Activated CD8-positive, alpha-beta T cell treated with anti-CD3 and anti-CD28 coated beads for 36 hours (primary cell): ENCODE measurements at regions of chr4 and their contacts with region 1.

Region 1: DNA sequence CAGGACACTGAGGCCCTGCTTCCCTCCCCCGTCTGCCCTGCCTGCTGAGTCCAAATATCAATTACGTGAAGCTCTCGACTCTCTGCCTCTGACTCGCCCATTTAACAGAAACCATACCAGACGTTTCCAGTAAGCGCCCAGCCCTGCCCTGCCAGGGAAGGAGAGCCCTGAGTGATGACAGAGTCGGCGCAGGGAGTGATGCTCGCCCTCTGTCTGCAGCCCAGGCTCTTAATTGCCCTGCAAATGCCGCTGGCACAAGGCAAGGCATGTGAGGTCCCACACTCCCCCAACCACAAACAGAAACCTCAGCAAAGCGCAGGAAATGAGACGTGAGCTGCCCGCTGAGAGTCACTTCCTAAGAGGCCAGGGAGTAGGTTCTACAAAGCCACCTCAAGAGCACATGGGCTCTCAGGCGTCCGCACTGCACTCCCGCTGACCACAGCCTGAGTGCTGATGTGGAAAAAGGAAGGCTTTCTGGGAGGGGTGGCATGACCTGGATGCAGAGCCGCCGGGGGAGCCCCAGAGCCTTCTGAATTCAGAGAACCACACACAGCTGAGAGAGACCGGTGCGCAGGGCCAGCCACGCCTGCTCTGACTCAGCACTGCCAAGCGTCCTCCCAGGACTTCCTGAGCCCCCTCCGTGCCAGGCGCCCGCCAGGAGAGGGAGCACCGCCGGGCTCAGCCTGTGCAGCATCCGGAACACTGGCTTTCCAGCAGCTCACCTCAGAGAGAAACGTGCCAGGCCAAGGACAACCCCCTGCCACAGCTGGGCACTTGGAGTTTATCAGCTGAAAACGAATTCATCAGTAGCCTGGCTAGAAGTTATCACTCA is 5.3 kb downstream of the ZFYVE28 start:
- DNase-seq: peak; percentile 96
- ATAC-seq: peak; percentile 86
- H3K4me3 Mint-ChIP-seq: peak overlapping the region; percentile 56
- H3K27ac Mint-ChIP-seq: peak overlapping the region; percentile 99
- H3K4me1 Mint-ChIP-seq: peaks cover 58% of the 10 kb centered on the region
- H3K27me3 Mint-ChIP-seq: peaks cover 26% of the 10 kb centered on the region
- CTCF ChIP-seq: no peak

Region 2: GRCh38 chr4:2241410-2242353 is 171.4 kb before region 1 on chr4 and contains the starts of genes HAUS3 and POLN:
- CTCF ChIA-PET with region 1: interaction called, 7 read pairs
- POLR2A ChIA-PET with region 1: interaction called, 7 read pairs
- intact Hi-C with region 1: loop called (anchors 5 kb)
- DNase-seq: peak; percentile 99
- ATAC-seq: peak; percentile 98
- H3K4me3 Mint-ChIP-seq: peak within 1 kb of the TSS; percentile 83
- H3K27ac Mint-ChIP-seq: peak within 1 kb of the TSS; percentile 88
- H3K4me1 Mint-ChIP-seq: peaks cover 55% of the 10 kb centered on the region
- H3K27me3 Mint-ChIP-seq: no peaks in the 10 kb centered on the region
- CTCF ChIP-seq: no peak
- total RNA-seq, gene HAUS3: 18.4 to 19.5 TPM
- total RNA-seq, gene POLN: 2.1 to 2.9 TPM

Region 3: GRCh38 chr4:2262143-2262943 is 150.8 kb before region 1 on chr4:
- CTCF ChIA-PET with region 1: interaction called, 3 read pairs
- POLR2A ChIA-PET with region 1: interaction called, 3 read pairs
- intact Hi-C with region 1: loop called (anchors 2 kb)
- DNase-seq: peak; percentile 99
- ATAC-seq: peak; percentile 93
- H3K4me3 Mint-ChIP-seq: peak overlapping the region; percentile 69
- H3K27ac Mint-ChIP-seq: peak overlapping the region; percentile 66
- H3K4me1 Mint-ChIP-seq: no peaks in the 10 kb centered on the region
- H3K27me3 Mint-ChIP-seq: no peaks in the 10 kb centered on the region
- CTCF ChIP-seq: no peak

Region 4: GRCh38 chr4:2281575-2282343 is 131.3 kb before region 1 on chr4:
- CTCF ChIA-PET with region 1: interaction called, 3 read pairs
- POLR2A ChIA-PET with region 1: interaction called, 3 read pairs
- intact Hi-C with region 1: loop called (anchors 5 kb)
- DNase-seq: peak; percentile 91
- ATAC-seq: peak; percentile 93
- H3K4me3 Mint-ChIP-seq: peak overlapping the region; percentile 43
- H3K27ac Mint-ChIP-seq: peak overlapping the region; percentile 96
- H3K4me1 Mint-ChIP-seq: peaks cover 37% of the 10 kb centered on the region
- H3K27me3 Mint-ChIP-seq: no peaks in the 10 kb centered on the region
- CTCF ChIP-seq: peak; percentile 41

Region 5: GRCh38 chr4:2393353-2394270 is 19.5 kb before region 1 on chr4:
- CTCF ChIA-PET with region 1: interaction called, 12 read pairs
- POLR2A ChIA-PET with region 1: interaction called, 4 read pairs
- intact Hi-C with region 1: no loop called
- DNase-seq: no peak
- ATAC-seq: peak; percentile 58
- H3K4me3 Mint-ChIP-seq: no peak overlapping the region
- H3K27ac Mint-ChIP-seq: no peak overlapping the region
- H3K4me1 Mint-ChIP-seq: peaks cover 24% of the 10 kb centered on the region
- H3K27me3 Mint-ChIP-seq: peaks cover 9% of the 10 kb centered on the region
- CTCF ChIP-seq: no peak

Region 6: GRCh38 chr4:2402029-2402428 is 11.1 kb before region 1 on chr4:
- CTCF ChIA-PET with region 1: interaction called, 7 read pairs
- POLR2A ChIA-PET with region 1: interaction called, 22 read pairs
- intact Hi-C with region 1: no loop called
- DNase-seq: peak; percentile 50
- ATAC-seq: peak; percentile 71
- H3K4me3 Mint-ChIP-seq: peak overlapping the region; percentile 55
- H3K27ac Mint-ChIP-seq: no peak overlapping the region
- H3K4me1 Mint-ChIP-seq: peaks cover 19% of the 10 kb centered on the region
- H3K27me3 Mint-ChIP-seq: peaks cover 2% of the 10 kb centered on the region
- CTCF ChIP-seq: no peak

Region 7: DNA sequence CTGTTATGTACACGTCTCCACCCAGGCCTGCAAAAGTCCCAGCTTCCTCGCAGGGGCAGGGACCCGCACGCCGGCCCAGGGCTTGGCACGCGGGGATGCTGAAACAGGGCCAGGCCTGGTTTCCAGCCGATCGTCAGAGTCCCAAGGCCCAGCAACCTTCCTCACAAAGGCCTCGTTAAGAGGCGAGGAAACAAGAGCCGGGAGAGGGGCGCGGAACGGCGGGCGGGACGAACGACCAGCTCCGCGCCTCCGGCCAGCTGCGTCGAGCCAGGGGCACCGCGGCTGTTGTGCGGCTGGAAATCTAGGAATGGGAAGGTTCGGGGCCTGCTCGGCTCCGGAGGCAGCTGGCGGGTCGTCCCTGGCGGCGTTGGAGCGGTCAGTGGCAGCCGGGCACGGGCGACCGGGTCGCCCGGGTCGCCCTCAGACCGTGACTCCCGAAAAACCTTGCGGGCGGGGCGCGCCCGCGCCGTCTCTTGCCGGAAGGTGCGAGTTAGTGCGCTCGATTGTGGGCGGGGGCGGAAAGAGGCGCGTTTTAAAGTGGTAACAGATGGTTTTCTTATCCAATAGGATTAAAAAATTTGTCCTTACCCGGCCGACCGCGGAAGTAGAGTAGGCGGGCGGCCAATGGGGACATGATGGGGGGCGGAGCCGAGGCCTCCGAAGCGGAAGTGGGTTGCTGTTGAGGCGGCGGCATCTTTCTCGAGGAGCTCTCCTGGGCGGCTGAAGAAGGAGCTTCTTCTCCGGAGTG is 55.5 kb after region 1 on chr4 and contains the start of gene RNF4:
- CTCF ChIA-PET with region 1: interaction called, 5 read pairs
- POLR2A ChIA-PET with region 1: interaction called, 22 read pairs
- intact Hi-C with region 1: no loop called
- DNase-seq: peak; percentile 99
- ATAC-seq: peak; percentile 87
- H3K4me3 Mint-ChIP-seq: peak within 1 kb of the TSS; percentile 96
- H3K27ac Mint-ChIP-seq: peak within 1 kb of the TSS; percentile 99
- H3K4me1 Mint-ChIP-seq: peaks cover 40% of the 10 kb centered on the region
- H3K27me3 Mint-ChIP-seq: no peaks in the 10 kb centered on the region
- CTCF ChIP-seq: no peak
- total RNA-seq, gene RNF4: 94.6 to 96.2 TPM

Region 8: DNA sequence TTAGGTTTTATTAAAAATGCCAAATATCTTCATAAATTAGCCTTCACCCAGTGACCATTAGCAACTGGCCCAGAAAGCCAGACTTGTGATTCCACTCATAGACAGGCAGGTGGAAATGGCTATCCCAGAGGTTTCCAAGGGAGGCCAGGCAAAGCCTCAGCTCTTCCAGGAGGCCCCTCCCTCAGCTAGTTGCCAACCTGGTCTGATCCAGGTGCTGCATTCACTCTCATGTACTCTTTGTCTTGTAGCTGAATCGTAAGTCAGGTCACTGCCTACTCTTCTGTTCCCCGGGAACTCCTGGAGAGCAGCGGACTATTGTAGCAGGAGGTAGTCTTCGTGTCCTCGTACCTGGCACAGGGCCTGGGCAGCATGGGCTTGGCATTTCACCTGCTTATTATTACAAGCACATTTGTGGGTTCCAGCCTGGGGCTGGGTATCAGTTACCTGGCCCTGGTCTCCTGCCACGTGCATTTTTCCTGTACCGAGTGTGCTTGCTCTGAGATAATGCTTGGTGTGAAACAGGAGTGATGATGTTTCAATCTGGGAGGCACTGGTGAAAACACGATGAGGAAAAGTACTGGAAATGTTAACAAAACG is 225.0 kb after region 1 on chr4:
- CTCF ChIA-PET with region 1: no interaction called
- POLR2A ChIA-PET with region 1: no interaction called
- intact Hi-C with region 1: no loop called
- DNase-seq: no peak
- ATAC-seq: no peak
- H3K4me3 Mint-ChIP-seq: no peak overlapping the region
- H3K27ac Mint-ChIP-seq: no peak overlapping the region
- H3K4me1 Mint-ChIP-seq: no peaks in the 10 kb centered on the region
- H3K27me3 Mint-ChIP-seq: no peaks in the 10 kb centered on the region
- CTCF ChIP-seq: no peak